Tibial artery (tissue), 4 donors: ENCODE measurements at regions of chr15 and their contacts with region 1.

Region 1: GRCh38 chr15:92831655-92832328 is 68.3 kb upstream of the CHD2 start:
- DNase-seq: peak; percentile 95 to 98
- H3K4me3 ChIP-seq: peak overlapping the region; percentile 44 to 48
- H3K27ac ChIP-seq: peak overlapping the region; percentile 86 to 92
- H3K4me1 ChIP-seq: peaks cover 5 to 65% (median 41%) of the 10 kb centered on the region in 4 donors
- H3K27me3 ChIP-seq: no peaks in the 10 kb centered on the region
- CTCF ChIP-seq: no peak

Region 2: GRCh38 chr15:92881802-92882696 is 50.3 kb after region 1 on chr15:
- intact Hi-C with region 1: loop called (anchors 1 kb)
- DNase-seq: peak; percentile 99 to 100
- H3K4me3 ChIP-seq: peak overlapping the region; percentile 69 to 100
- H3K27ac ChIP-seq: peak overlapping the region; percentile 89 to 100
- H3K4me1 ChIP-seq: peaks cover 0 to 31% (median 7%) of the 10 kb centered on the region in 4 donors
- H3K27me3 ChIP-seq: no peaks in the 10 kb centered on the region
- CTCF ChIP-seq: peak in 1 of 2 experiments; percentile 8